ENCODE measurements at regions of chr9 and their contacts with region 1.

Region 1: DNA sequence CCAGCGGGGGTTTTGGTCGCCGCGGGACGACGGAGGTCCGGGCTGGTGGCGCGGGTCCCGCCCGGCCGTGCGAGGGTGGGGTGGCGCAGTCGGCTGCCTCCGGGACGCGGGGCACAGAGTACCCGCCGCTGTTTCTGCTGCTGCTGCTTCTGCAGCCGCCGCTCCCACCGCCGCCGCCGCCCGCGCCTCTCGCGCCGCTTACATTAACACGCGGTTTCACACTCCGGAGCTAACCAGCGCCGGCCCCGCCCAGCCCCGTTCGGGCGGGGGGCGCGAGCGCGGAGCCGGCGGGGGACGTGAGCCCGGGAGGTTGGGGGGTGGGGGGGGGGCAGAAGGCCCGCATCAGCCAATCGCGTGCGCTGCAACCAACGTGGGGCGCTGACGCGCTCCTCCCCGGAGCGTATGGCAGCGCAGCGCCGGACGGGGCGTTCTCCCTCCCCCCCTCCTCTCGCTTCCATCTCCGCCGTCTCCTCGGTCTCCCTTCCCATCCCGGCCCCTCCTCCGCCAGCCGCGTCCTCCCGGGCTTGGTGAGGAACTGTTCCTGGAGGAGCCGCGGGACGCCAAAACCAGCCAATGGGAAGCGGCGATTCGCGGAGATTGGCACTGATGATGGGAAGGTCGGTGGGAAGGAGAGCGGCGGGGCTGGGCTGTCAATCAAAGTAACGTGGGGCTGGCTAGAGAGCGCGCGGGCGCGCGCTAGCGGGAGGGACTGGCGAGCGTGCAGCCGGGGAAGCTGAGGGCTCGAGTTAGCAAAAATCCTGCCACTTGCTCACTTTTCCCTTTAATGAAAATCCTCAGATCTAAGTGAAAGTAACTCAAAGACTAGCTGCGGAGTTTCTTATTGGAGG is at the start of gene TLE1:
- DNase-seq: peak; percentile 96 to 99
- H3K4me3 ChIP-seq: peak within 1 kb of the TSS; percentile 73
- H3K4me3 Mint-ChIP-seq: peak within 1 kb of the TSS; percentile 95
- H3K27ac Mint-ChIP-seq: peak within 1 kb of the TSS; percentile 91
- H3K4me1 ChIP-seq: peaks cover 26% of the 10 kb centered on the region
- H3K4me1 Mint-ChIP-seq: no peaks in the 10 kb centered on the region
- H3K27me3 ChIP-seq: no peaks in the 10 kb centered on the region
- H3K27me3 Mint-ChIP-seq: no peaks in the 10 kb centered on the region
- CTCF ChIP-seq: no peak
- total RNA-seq, gene TLE1: 17.9 and 18.3 TPM in 2 replicates

Region 2: DNA sequence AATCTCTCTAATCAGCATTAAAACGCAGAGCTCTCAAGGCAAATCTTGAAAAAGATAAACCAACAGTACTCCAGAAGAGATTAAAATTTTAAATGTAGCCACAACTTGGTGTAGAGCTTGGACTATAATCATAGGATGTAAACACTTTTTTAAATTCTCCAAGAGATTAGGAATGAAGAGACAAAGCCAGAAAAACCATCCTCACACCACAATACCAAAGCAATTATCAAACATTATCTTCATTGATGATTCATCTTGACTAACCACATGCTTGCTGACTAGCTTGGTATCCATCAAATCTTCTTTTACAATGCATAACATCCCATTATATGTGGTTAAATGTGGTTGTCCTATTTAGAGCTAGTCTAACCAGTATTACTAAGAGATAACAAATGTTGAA is 815.3 kb before region 1 on chr9:
- CTCF ChIA-PET with region 1: no interaction called
- POLR2A ChIA-PET with region 1: no interaction called
- intact Hi-C with region 1: loop called (anchors 5 kb)
- DNase-seq: no peak
- H3K4me3 ChIP-seq: no peak overlapping the region
- H3K4me3 Mint-ChIP-seq: no peak overlapping the region
- H3K27ac Mint-ChIP-seq: no peak overlapping the region
- H3K4me1 ChIP-seq: no peaks in the 10 kb centered on the region
- H3K4me1 Mint-ChIP-seq: no peaks in the 10 kb centered on the region
- H3K27me3 ChIP-seq: no peaks in the 10 kb centered on the region
- H3K27me3 Mint-ChIP-seq: no peaks in the 10 kb centered on the region
- CTCF ChIP-seq: no peak

Region 3: GRCh38 chr9:81535542-81536241 is 153.9 kb before region 1 on chr9:
- CTCF ChIA-PET with region 1: no interaction called
- POLR2A ChIA-PET with region 1: no interaction called
- intact Hi-C with region 1: loop called (anchors 5 kb)
- DNase-seq: peak; percentile 26 to 27
- H3K4me3 ChIP-seq: no peak overlapping the region
- H3K4me3 Mint-ChIP-seq: no peak overlapping the region
- H3K27ac Mint-ChIP-seq: no peak overlapping the region
- H3K4me1 ChIP-seq: no peaks in the 10 kb centered on the region
- H3K4me1 Mint-ChIP-seq: no peaks in the 10 kb centered on the region
- H3K27me3 ChIP-seq: no peaks in the 10 kb centered on the region
- H3K27me3 Mint-ChIP-seq: no peaks in the 10 kb centered on the region
- CTCF ChIP-seq: no peak

Region 4: GRCh38 chr9:81656004-81656403 is 33.6 kb before region 1 on chr9:
- CTCF ChIA-PET with region 1: no interaction called
- POLR2A ChIA-PET with region 1: no interaction called
- intact Hi-C with region 1: loop called (anchors 1 kb)
- DNase-seq: no peak
- H3K4me3 ChIP-seq: no peak overlapping the region
- H3K4me3 Mint-ChIP-seq: no peak overlapping the region
- H3K27ac Mint-ChIP-seq: no peak overlapping the region
- H3K4me1 ChIP-seq: peaks cover 5% of the 10 kb centered on the region; the same call in 1 of the 2 replicates
- H3K4me1 Mint-ChIP-seq: no peaks in the 10 kb centered on the region
- H3K27me3 ChIP-seq: no peaks in the 10 kb centered on the region
- H3K27me3 Mint-ChIP-seq: no peaks in the 10 kb centered on the region
- CTCF ChIP-seq: no peak

Region 5: GRCh38 chr9:81705578-81705977 is 16.0 kb after region 1 on chr9:
- CTCF ChIA-PET with region 1: no interaction called
- POLR2A ChIA-PET with region 1: no interaction called
- intact Hi-C with region 1: no loop called
- DNase-seq: no peak
- H3K4me3 ChIP-seq: no peak overlapping the region
- H3K4me3 Mint-ChIP-seq: no peak overlapping the region
- H3K27ac Mint-ChIP-seq: no peak overlapping the region
- H3K4me1 ChIP-seq: no peaks in the 10 kb centered on the region
- H3K4me1 Mint-ChIP-seq: no peaks in the 10 kb centered on the region
- H3K27me3 ChIP-seq: no peaks in the 10 kb centered on the region
- H3K27me3 Mint-ChIP-seq: no peaks in the 10 kb centered on the region
- CTCF ChIP-seq: no peak

Region 6: GRCh38 chr9:81787747-81788632 is 98.4 kb after region 1 on chr9:
- CTCF ChIA-PET with region 1: no interaction called
- POLR2A ChIA-PET with region 1: no interaction called
- intact Hi-C with region 1: loop called (anchors 1 kb)
- DNase-seq: peak; percentile 60 to 77
- H3K4me3 ChIP-seq: no peak overlapping the region
- H3K4me3 Mint-ChIP-seq: peak overlapping the region; percentile 43
- H3K27ac Mint-ChIP-seq: peak overlapping the region; percentile 69
- H3K4me1 ChIP-seq: peaks cover 24% of the 10 kb centered on the region
- H3K4me1 Mint-ChIP-seq: peaks cover 5% of the 10 kb centered on the region
- H3K27me3 ChIP-seq: no peaks in the 10 kb centered on the region
- H3K27me3 Mint-ChIP-seq: no peaks in the 10 kb centered on the region
- CTCF ChIP-seq: no peak

Region 7: GRCh38 chr9:81848472-81848871 is 158.9 kb after region 1 on chr9:
- CTCF ChIA-PET with region 1: no interaction called
- POLR2A ChIA-PET with region 1: no interaction called
- intact Hi-C with region 1: loop called (anchors 2 kb)
- DNase-seq: no peak
- H3K4me3 ChIP-seq: no peak overlapping the region
- H3K4me3 Mint-ChIP-seq: no peak overlapping the region
- H3K27ac Mint-ChIP-seq: no peak overlapping the region
- H3K4me1 ChIP-seq: no peaks in the 10 kb centered on the region
- H3K4me1 Mint-ChIP-seq: no peaks in the 10 kb centered on the region
- H3K27me3 ChIP-seq: no peaks in the 10 kb centered on the region
- H3K27me3 Mint-ChIP-seq: no peaks in the 10 kb centered on the region
- CTCF ChIP-seq: no peak

Measured in Caco-2 (cell line).